Prostate gland (tissue), 2 donors: ENCODE measurements at regions of chr3 and their contacts with region 1.

Region 1: GRCh38 chr3:117019082-117019713 is 309.6 kb downstream of the TUSC7 start:
- DNase-seq: peak; percentile 52
- H3K4me3 ChIP-seq: no peak overlapping the region
- H3K27ac ChIP-seq: no peak overlapping the region
- H3K4me1 ChIP-seq: no peaks in the 10 kb centered on the region
- H3K27me3 ChIP-seq: no peaks in the 10 kb centered on the region
- CTCF ChIP-seq: peak; percentile 26 to 77 (median 70)
- POLR2A ChIP-seq: no peak

Region 2: GRCh38 chr3:116741467-116741866 is 277.7 kb before region 1 on chr3:
- intact Hi-C with region 1: no loop called
- DNase-seq: no peak
- H3K4me3 ChIP-seq: no peak overlapping the region
- H3K27ac ChIP-seq: no peak overlapping the region
- H3K4me1 ChIP-seq: no peaks in the 10 kb centered on the region
- H3K27me3 ChIP-seq: no peaks in the 10 kb centered on the region
- CTCF ChIP-seq: no peak
- POLR2A ChIP-seq: no peak

Region 3: GRCh38 chr3:117355566-117355965 is 336.4 kb after region 1 on chr3:
- intact Hi-C with region 1: loop called (anchors 5 kb)
- DNase-seq: no peak
- H3K4me3 ChIP-seq: no peak overlapping the region
- H3K27ac ChIP-seq: no peak overlapping the region
- H3K4me1 ChIP-seq: no peaks in the 10 kb centered on the region
- H3K27me3 ChIP-seq: no peaks in the 10 kb centered on the region
- CTCF ChIP-seq: peak in 3 of 4 experiments; percentile 35 to 52 (median 47)
- POLR2A ChIP-seq: no peak